SK-N-SH (cell line): ENCODE measurements at regions of chr6 and their contacts with region 1.

Region 1: DNA sequence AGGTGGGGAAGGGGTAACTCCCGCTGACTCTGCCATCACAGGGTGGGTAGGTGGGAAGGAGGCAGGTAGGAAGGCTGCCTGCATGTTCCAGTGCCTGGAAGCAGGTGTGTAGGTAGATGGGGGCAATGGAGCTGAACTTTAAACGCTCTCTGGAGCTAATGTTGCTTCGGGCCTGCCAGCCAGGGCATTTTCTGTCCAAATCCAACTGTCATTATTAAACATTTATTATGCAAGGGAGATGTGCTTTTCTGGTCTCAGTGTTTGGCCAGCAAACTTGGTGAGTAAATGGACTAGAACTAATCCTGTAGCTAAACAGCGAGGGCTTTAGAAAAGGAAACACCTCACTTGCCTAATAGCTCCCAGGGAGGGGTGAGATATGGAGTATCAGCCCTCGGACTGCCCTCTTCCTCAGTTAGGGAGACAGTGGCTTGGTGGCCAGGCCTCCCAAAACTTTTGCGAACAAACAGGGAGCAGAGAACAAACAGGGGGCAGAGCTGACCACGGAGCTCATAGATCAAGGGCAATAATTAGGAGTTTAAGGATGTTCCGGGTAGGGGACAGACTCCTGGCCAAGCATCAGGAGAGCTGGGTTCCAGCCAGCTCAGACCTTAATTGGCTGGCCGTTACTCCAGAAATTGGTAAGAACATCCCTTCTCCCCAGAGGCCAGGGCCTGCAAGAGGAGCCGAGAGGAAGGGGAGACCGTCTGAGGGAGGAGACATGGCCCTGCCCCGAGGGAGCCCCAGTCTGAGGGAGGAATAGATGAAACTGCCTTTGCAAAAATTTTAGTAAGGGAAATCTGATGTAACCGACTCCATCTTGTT is 131.1 kb downstream of the VEGFA start:
- DNase-seq: no peak
- H3K4me3 ChIP-seq: no peak overlapping the region
- H3K27ac ChIP-seq: peak overlapping the region in 1 of 2 experiments; percentile 91; a peak in 2 of 4 replicates
- H3K4me1 ChIP-seq: peaks cover 0 to 61% of the 10 kb centered on the region in 2 experiments; a peak in 2 of 4 replicates
- H3K27me3 ChIP-seq: no peaks in the 10 kb centered on the region
- CTCF ChIP-seq: no peak
- EP300 ChIP-seq: no peak
- RAD21 ChIP-seq: no peak

Region 2: DNA sequence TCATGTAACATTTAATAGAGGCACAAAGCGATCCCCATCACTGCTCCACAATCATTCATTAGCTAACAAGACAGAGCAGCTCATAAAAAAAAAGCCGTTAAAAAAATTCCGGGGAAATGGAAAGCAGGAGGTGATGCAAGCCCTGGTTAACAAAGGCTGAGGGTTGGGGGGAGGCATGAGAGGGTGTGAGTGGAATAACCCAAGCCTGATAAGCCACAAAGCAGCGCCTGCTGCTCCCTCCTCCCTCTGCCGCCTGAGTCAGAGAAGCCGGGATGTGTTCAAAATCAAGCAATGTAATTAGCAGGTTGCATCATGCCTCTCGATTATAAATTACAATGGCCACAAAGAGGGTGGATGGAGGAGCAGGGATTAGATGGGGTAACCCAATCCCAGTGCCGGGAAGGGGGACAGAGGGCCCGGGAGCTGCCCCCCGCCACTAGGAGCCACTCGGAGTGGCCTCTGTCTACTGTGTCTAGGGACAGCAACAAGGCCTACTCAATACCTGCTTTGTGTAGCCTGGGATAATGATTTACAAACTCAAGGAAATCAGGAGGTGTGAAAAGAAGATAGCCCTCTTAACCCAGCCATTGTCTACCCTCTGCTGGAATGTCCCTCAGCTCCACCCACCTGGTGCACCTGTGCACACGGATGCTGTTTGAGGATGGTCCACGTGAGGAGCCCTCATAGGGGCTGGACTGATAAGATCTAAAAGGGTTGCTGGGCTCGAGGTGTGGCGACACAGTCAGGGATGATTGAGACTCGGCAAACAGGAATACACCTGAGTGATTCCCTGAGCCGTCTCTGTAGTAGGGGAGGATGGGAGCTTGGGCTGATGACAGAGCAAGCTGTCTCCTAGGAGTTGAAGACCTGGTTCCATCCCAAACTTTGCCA is 25.8 kb after region 1 on chr6:
- CTCF ChIA-PET with region 1: interaction called, 10 read pairs
- POLR2A ChIA-PET with region 1: interaction called, 4 read pairs
- DNase-seq: peak; percentile 81
- H3K4me3 ChIP-seq: no peak overlapping the region
- H3K27ac ChIP-seq: peak overlapping the region; percentile 27 to 98; a peak in 3 of 4 replicates
- H3K4me1 ChIP-seq: peaks cover 40 to 82% of the 10 kb centered on the region in 2 experiments
- H3K27me3 ChIP-seq: no peaks in the 10 kb centered on the region
- CTCF ChIP-seq: no peak
- EP300 ChIP-seq: peak in 1 of 2 experiments; percentile 51; a peak in 2 of 4 replicates
- RAD21 ChIP-seq: peak; percentile 34